Body of pancreas (tissue), 4 donors: ENCODE measurements at regions of chr18 and their contacts with region 1.

Region 1: DNA sequence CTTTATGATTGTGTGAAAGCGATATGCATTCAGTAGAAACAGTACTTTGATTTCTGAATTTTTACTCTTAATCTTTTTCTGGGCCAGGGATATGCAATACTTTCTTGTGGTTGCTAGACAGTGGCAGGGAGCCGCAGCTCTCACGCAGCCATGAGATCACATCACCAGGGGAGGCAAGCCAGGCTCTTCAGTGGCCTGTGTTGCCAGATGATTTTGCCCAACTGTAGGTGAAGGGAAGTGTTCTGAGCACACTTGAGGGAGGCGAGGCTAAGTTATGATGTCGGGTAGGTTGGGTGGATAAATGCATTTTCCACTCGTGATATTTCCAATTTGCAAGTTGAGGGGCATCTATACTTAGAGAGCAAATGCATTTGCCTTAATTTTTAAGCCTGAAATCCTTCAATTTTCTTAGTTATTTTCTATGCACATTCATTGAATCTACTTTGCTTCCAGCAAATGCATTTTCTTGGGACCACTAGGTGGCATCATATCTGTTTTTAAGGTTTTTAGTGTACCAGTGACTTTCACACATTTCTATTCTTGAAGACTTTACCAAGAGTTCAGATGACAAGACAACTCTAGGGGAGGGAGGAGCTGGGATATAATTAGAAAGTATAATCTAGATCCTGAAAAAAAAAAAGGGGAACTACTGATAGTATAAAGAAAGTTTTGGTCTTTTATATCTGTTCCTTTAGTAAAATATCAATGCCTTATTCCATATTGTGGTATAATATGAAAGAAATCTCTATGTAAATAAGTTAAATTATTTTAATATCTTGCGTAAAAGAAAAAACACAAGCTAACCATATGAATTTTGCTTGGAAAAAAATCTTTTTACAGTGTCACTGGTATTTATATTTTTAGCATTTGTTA is 643.3 kb downstream of the SOCS6 start:
- DNase-seq: no peak
- ATAC-seq: no peak
- H3K4me3 ChIP-seq: no peak overlapping the region
- H3K27ac ChIP-seq: no peak overlapping the region
- H3K4me1 ChIP-seq: no peaks in the 10 kb centered on the region
- H3K27me3 ChIP-seq: no peaks in the 10 kb centered on the region
- CTCF ChIP-seq: peak in 6 of 7 experiments; percentile 37 to 63 (median 47)
- POLR2A ChIP-seq: no peak

Region 2: DNA sequence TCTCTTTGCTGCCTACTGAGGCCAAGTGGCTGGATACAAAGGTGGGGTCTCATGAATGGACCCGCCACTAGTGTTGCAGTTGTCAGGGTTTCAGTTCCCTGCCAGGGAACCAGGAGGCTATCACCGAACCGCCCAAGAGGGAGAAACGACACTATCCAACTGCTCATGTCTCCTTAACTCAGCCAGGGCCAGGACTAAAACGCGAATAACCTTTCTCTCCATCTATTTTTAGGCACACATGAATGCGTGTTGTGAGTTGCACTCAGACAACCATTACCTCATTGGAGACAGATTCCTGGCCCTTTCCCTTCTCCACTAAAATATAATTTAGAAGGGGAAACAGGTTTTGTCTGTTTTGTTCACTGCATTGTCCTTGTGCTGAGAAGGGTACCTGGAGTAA is 83.8 kb before region 1 on chr18:
- intact Hi-C with region 1: no loop called
- DNase-seq: no peak
- ATAC-seq: no peak
- H3K4me3 ChIP-seq: no peak overlapping the region
- H3K27ac ChIP-seq: no peak overlapping the region
- H3K4me1 ChIP-seq: no peaks in the 10 kb centered on the region
- H3K27me3 ChIP-seq: no peaks in the 10 kb centered on the region
- CTCF ChIP-seq: no peak
- POLR2A ChIP-seq: no peak

Region 3: GRCh38 chr18:72544092-72544886 is 1612.1 kb after region 1 on chr18 and contains the start of gene CBLN2:
- intact Hi-C with region 1: loop called (anchors 10 kb)
- DNase-seq: peak; percentile 27 to 57 (median 41)
- ATAC-seq: peak; percentile 71
- H3K4me3 ChIP-seq: no peak within 1 kb of the TSS
- H3K27ac ChIP-seq: no peak within 1 kb of the TSS
- H3K4me1 ChIP-seq: peaks cover 15% of the 10 kb centered on the region
- H3K27me3 ChIP-seq: peaks cover 0 to 7% of the 10 kb centered on the region in 2 donors
- CTCF ChIP-seq: peak; percentile 48 to 65 (median 53)
- POLR2A ChIP-seq: no peak
- total RNA-seq, gene CBLN2: not detected